Activated T-helper 2 cell treated with anti-CD3 and anti-CD28 coated beads, Interferon-gamma antibody, Interleukin-2, Interleukin-4, amounts not matched to agents 10 μg/mL and 5 μg/mL and 100 μg/mL, durations not matched to agents 14 hours and 24 hours and 36 hours (primary cell): ENCODE measurements at regions of chr14 and their contacts with region 1.

Region 1: DNA sequence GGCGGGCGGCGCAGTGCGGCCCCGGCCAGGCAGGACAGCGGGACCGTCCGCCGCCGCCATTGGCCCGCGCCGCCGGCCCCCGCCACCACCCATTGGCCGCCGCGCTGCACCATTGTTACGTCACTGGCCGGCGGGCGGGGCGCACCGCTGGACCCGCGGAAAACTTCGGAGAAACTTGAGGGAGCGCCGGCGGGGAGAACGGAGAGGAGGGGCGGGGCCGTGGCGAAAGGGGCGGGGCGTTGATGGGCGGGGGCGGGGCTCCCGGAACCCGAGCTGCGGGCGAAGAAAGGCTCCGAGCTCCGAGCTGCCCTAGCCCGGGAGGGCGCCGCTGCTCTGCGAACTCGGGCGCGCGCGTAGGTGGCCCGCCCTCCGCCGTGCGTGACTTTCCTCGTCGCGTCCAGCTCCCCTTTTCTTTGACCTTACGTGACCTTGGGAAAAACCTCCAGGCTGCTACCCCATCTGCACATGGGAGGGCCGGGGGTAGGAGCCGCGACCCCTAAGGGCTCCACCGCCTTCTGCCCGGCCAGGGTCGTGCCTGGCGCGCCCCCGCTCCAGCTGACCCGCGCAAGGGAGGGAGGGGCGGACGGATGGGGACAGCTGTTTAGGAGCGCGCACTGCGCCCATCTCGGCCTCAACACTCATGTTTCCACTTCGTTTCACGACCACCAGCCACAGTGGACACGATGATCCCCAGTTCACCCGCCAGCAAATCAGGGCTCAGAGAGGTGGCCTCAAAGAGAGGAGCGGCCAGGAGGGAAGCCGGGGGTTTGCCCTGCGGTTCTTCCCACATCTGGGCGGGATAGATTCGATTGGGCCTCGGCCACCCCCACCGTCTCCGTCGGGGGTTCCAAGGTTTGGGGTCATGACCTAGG is at the start of gene ANKRD9:
- DNase-seq: peak; percentile 87
- H3K4me3 Mint-ChIP-seq: peak within 1 kb of the TSS; percentile 81
- H3K27ac Mint-ChIP-seq: peak within 1 kb of the TSS; percentile 52
- H3K4me1 Mint-ChIP-seq: peaks cover 12% of the 10 kb centered on the region
- H3K27me3 Mint-ChIP-seq: no peaks in the 10 kb centered on the region
- total RNA-seq, gene ANKRD9: 16.9 and 17.0 TPM in 2 replicates

Region 2: GRCh38 chr14:102086972-102087761 is 422.8 kb before region 1 on chr14 and contains the start of gene HSP90AA1:
- intact Hi-C with region 1: loop called (anchors 10 kb)
- DNase-seq: peak; percentile 94
- H3K4me3 Mint-ChIP-seq: peak within 1 kb of the TSS; percentile 90
- H3K27ac Mint-ChIP-seq: peak within 1 kb of the TSS; percentile 93
- H3K4me1 Mint-ChIP-seq: peaks cover 49% of the 10 kb centered on the region
- H3K27me3 Mint-ChIP-seq: no peaks in the 10 kb centered on the region
- total RNA-seq, gene HSP90AA1: 995 and 1,017 TPM in 2 replicates

Region 3: DNA sequence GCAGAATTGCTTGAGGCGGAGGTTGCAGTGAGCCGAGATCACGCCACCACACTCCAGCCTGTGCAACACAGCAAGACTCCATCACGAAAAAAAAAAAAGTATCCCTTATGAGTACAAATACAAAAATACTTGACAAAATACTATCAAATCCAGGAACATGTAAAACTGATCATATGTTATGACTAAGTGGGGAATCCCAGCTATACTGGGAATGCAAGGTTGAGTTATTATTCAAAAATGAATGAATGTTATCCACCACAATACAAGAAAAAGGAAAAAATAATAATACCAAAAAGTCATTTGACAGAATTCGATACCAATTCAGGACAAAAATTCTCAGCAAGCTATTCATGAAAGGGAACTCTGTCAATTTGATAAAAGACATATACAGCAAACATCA is 237.6 kb before region 1 on chr14:
- intact Hi-C with region 1: no loop called
- DNase-seq: no peak
- H3K4me3 Mint-ChIP-seq: no peak overlapping the region
- H3K27ac Mint-ChIP-seq: no peak overlapping the region
- H3K4me1 Mint-ChIP-seq: no peaks in the 10 kb centered on the region
- H3K27me3 Mint-ChIP-seq: peaks cover 3% of the 10 kb centered on the region

Region 4: DNA sequence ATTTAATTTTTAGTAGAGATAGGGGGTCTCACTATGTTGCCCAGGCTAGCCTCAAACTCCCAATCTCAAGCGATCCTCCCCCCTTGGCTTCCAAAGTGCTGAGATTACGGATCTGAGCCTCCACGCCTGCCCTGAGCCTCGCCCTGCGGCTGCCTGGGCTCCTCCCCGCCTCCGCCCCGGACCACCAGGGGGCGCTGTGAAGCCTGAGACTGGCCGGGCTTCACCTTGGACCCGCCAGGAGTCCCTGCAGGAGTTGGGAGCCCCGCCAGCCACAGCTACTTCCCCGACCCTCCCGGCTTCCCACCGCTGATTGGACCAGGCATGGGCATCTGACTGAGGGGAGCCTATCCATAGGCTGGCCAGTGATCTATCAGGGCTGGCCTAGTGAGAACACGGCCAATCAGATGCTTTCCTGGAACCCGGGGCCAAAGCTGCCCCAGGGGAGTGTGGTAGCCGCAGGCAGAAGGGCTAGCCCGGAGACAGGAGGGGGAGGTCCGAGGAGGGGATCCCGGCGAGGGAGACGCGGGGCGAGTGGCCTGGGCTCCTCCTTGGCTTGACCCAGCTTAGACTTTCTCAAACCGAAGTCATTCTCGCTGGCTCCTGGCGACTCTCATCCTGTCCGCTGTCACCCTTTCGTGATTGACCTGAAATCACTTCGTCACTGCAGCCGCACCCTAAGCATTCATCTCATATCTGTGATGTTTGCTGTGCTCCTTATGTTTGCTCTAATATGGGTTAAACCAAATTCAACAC is 14.7 kb after region 1 on chr14:
- intact Hi-C with region 1: loop called (anchors 1 kb)
- DNase-seq: peak; percentile 95
- H3K4me3 Mint-ChIP-seq: peak overlapping the region; percentile 94
- H3K27ac Mint-ChIP-seq: peak overlapping the region; percentile 90
- H3K4me1 Mint-ChIP-seq: peaks cover 15% of the 10 kb centered on the region
- H3K27me3 Mint-ChIP-seq: no peaks in the 10 kb centered on the region

Region 5: GRCh38 chr14:103198131-103199105 is 688.4 kb after region 1 on chr14:
- intact Hi-C with region 1: no loop called
- DNase-seq: no peak
- H3K4me3 Mint-ChIP-seq: no peak overlapping the region
- H3K27ac Mint-ChIP-seq: no peak overlapping the region
- H3K4me1 Mint-ChIP-seq: no peaks in the 10 kb centered on the region
- H3K27me3 Mint-ChIP-seq: peaks cover 2% of the 10 kb centered on the region